ENCODE measurements at regions of chr6 and their contacts with region 1.

Region 1: DNA sequence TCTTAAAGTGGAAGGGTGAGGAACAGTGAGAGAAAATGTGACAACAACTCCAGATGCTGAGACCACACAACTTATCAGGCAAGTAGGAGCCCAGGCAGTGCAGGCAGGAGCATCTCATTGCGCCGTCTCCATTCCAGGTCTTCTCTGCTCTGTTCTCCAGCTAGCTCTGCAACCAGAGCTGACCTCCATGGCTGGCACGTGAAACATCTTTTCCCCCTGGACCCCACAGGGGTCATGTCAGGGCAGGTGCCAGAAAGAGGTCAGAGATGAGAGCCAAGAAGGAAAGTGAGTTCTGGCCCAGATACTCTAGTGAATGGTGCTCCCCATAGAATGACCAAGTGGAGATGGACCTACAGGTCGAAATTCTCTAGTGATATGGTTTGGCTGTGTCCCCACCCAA is 281.4 kb downstream of the SMOC2 start:
- DNase-seq: no peak
- H3K4me3 ChIP-seq: no peak overlapping the region
- H3K27me3 ChIP-seq: no peaks in the 10 kb centered on the region
- CTCF ChIP-seq: no peak

Region 2: DNA sequence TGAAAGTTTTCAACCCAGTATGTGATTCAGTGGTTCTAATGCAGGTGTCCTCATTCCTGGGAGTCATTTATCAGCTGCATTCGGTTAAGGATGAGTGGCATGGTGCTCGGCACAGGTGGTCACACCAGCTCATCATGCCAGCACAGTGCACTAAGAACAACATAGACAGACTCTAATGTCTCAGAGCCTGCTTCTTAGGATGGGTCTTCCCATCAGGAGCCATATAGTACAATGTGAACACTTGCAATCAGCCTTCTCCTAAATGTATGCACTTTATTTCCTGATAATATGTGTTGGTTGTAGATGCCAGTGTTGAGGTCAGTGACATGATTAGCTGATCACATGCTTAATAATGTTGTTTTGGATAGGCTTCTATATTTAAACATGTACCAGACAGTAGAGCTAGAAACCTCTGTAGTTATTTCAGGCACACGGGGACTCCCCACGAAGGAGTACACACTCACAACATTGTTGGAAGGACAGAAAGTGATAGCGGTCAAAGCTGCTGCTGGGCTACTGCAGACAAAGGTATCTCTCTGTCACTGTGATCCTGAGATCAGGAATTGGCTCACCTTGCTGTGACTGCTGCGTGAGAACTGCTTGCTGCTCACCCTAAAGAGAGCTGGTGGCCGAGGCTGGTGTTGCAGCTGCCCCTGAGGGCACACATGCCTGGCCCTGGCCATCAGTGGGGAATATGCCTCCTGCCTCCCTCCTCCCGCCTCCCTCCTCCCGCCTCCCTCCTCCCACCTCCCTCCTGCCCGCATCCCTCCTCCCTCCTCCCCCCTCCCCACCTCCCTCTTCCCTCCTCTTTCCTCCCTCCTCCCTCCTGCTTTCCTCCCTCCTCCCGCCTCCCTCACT is 86.0 kb before region 1 on chr6:
- CTCF ChIA-PET with region 1: interaction called, 3 read pairs
- POLR2A ChIA-PET with region 1: interaction called, 10 read pairs
- DNase-seq: no peak
- H3K4me3 ChIP-seq: no peak overlapping the region
- H3K27me3 ChIP-seq: no peaks in the 10 kb centered on the region
- CTCF ChIP-seq: no peak

Region 3: GRCh38 chr6:168699631-168700295 is 22.6 kb before region 1 on chr6:
- CTCF ChIA-PET with region 1: no interaction called
- POLR2A ChIA-PET with region 1: no interaction called
- DNase-seq: no peak
- H3K4me3 ChIP-seq: no peak overlapping the region
- H3K27me3 ChIP-seq: no peaks in the 10 kb centered on the region
- CTCF ChIP-seq: no peak